ENCODE measurements at regions of chr10 and their contacts with region 1.

Region 1: DNA sequence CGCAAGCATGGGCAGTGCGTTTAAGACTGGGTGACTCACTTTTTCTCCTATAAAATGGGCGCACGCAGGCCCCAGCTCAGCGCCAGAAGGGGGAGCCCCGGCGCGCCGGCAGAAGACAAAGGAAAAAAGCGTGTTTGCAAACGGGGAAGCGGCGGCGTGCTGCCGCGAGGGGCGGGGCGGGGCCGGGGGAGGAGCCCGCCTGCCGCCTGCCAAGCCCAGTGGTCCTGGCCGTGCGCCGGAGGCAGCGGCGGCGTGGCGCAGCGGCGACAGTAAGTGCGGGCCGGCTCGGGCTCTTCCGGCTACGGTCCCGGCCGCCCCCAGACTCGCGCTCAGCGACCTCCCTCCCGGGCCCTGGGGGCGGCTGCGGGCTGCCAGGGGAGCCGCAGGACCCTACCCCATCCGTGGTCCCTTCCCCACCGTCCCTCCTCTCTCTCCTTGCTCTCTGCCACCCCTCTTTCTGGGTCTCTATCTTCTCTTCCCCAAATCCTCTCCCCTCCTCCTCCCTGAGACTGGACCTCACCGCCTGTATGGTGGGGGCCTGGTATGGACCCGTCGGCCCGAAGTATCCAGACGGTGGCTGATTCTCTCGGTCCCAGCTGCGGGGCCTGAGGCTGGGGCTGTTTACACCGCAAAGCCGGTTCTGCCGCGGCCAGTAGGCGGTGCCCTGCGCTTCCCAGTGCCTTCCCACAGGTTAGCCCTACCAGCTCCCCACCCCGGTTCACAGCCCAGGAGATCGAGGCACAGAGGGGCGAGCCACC is at the start of gene SLC29A3:
- DNase-seq: peak; percentile 83
- H3K4me3 ChIP-seq: peak within 1 kb of the TSS; percentile 63 to 69 (median 65)
- H3K27ac ChIP-seq: peak within 1 kb of the TSS; percentile 60
- H3K4me1 ChIP-seq: peaks cover 3% of the 10 kb centered on the region
- H3K27me3 ChIP-seq: peaks cover 0 to 1% of the 10 kb centered on the region in 2 experiments
- CTCF ChIP-seq: peak; percentile 79 to 89
- POLR2A ChIP-seq: peak; percentile 68
- total RNA-seq, gene SLC29A3: 3.5 and 5.0 TPM in 2 replicates

Region 2: GRCh38 chr10:70206762-70207161 is 1112.5 kb before region 1 on chr10:
- CTCF ChIA-PET with region 1: no interaction called
- POLR2A ChIA-PET with region 1: no interaction called
- dilution Hi-C with region 1: no loop called
- intact Hi-C with region 1: no loop called
- DNase-seq: no peak
- H3K4me3 ChIP-seq: no peak overlapping the region
- H3K27ac ChIP-seq: no peak overlapping the region
- H3K4me1 ChIP-seq: no peaks in the 10 kb centered on the region
- H3K27me3 ChIP-seq: no peaks in the 10 kb centered on the region
- CTCF ChIP-seq: no peak
- POLR2A ChIP-seq: no peak

Region 3: DNA sequence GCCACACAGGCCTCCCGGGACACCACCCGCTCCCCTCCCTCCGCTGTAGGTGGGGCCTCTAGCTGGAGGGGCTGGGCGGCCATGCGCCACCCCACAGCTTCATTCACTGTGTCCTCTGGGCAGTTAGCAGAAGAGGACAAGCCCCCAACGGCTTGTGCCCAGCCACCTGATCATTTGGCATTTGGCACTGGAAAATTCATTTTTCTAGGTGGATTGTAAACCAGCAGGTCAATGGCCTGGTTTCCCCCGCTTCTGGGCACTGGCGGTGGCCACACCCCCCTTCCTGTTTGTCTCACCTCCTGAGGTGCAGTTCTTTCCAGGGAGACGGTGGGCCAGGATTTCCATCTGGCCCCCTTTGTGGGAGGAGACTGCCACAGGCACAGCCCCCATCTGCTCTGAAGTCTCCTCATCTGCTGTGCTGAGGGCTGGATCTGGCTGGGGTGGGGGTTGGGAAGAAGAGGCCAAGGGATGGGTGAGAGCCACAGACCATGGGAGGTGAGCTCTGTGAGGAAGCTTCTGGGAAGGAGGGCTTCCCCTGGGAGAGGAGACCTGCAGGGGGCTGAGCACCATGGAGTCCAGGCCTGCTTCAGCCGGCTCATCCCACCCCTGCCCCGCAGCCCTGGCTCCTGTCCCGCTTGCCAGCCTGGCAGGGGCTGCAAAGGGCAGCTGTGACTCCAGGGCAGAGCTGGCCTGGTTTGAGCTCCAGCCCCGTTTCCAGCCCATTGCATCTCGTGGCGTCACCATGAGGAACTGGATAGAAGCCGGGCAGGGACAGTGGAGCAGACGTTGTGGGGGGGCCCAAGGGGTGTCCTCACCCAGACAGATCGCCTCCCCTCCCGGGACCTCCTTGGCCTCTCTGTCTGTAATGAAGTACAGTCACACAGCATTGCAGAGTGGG is 40.3 kb before region 1 on chr10:
- CTCF ChIA-PET with region 1: no interaction called
- POLR2A ChIA-PET with region 1: no interaction called
- dilution Hi-C with region 1: no loop called
- intact Hi-C with region 1: no loop called
- DNase-seq: no peak
- H3K4me3 ChIP-seq: no peak overlapping the region
- H3K27ac ChIP-seq: no peak overlapping the region
- H3K4me1 ChIP-seq: no peaks in the 10 kb centered on the region
- H3K27me3 ChIP-seq: no peaks in the 10 kb centered on the region
- CTCF ChIP-seq: no peak
- POLR2A ChIP-seq: no peak

Region 4: GRCh38 chr10:71372882-71373495 is 53.8 kb after region 1 on chr10:
- CTCF ChIA-PET with region 1: interaction called, 11 read pairs
- POLR2A ChIA-PET with region 1: no interaction called
- dilution Hi-C with region 1: no loop called
- intact Hi-C with region 1: loop called (anchors 1 kb)
- DNase-seq: no peak
- H3K4me3 ChIP-seq: no peak overlapping the region
- H3K27ac ChIP-seq: no peak overlapping the region
- H3K4me1 ChIP-seq: no peaks in the 10 kb centered on the region
- H3K27me3 ChIP-seq: peaks cover 0 to 21% of the 10 kb centered on the region in 2 experiments
- CTCF ChIP-seq: no peak
- POLR2A ChIP-seq: no peak

Region 5: GRCh38 chr10:71600849-71601248 is 281.6 kb after region 1 on chr10:
- CTCF ChIA-PET with region 1: interaction called, 3 read pairs
- POLR2A ChIA-PET with region 1: no interaction called
- dilution Hi-C with region 1: no loop called
- intact Hi-C with region 1: loop called (anchors 2 kb)
- DNase-seq: peak; percentile 70
- H3K4me3 ChIP-seq: no peak overlapping the region
- H3K27ac ChIP-seq: no peak overlapping the region
- H3K4me1 ChIP-seq: peaks cover 10% of the 10 kb centered on the region
- H3K27me3 ChIP-seq: no peaks in the 10 kb centered on the region
- CTCF ChIP-seq: no peak
- POLR2A ChIP-seq: no peak

Region 6: DNA sequence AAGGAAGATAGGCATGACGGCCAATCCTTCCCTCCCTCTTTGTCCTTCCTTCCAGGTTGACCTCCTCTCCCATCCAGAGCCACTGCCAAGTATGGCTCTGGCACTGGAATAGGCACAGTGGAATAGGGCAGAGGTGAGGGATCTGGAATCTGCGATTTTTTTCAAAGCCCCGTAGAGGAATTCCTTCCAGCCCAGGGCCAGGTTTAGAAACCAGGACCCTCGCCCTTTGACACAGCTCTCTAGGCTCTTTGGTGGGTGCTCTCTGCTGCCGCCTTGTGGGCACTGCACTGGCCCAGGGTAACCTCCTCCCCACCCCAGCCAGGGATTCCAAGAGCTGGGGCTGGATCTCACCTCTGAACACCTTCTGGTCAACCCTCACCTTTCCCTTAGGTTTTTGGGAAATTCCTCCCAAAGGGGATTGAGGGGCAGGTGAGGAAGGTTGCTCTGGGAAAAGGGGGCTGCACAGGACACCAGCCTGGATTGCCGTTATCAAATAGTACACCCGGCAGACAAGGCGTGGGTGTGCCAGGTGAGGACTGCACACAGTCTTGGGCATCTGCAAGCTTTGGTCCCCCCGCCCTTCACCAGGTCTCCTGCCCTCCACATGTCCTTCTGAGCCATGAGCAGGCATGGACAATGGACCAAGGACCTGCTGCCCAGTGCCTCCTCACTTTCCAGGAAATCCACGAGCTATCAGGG is 377.6 kb after region 1 on chr10:
- CTCF ChIA-PET with region 1: interaction called, 90 read pairs
- POLR2A ChIA-PET with region 1: no interaction called
- dilution Hi-C with region 1: no loop called
- intact Hi-C with region 1: loop called (anchors 1 kb)
- DNase-seq: peak; percentile 23
- H3K4me3 ChIP-seq: no peak overlapping the region
- H3K27ac ChIP-seq: no peak overlapping the region
- H3K4me1 ChIP-seq: peaks cover 24% of the 10 kb centered on the region
- H3K27me3 ChIP-seq: peaks cover 4 to 12% of the 10 kb centered on the region in 2 experiments
- CTCF ChIP-seq: peak; percentile 81 to 93
- POLR2A ChIP-seq: no peak